Activated T-helper 1 cell treated with anti-CD3 and anti-CD28 coated beads, Interleukin-12 subunit alpha, Interleukin-12 subunit beta, Interleukin-2, Interleukin-4 antibody, amounts not matched to agents 30 ng/mL and 10 ng/mL and 1 ng/mL, durations not matched to agents 14 hours and 24 hours and 36 hours (primary cell): ENCODE measurements at regions of chr4 and their contacts with region 1.

Region 1: DNA sequence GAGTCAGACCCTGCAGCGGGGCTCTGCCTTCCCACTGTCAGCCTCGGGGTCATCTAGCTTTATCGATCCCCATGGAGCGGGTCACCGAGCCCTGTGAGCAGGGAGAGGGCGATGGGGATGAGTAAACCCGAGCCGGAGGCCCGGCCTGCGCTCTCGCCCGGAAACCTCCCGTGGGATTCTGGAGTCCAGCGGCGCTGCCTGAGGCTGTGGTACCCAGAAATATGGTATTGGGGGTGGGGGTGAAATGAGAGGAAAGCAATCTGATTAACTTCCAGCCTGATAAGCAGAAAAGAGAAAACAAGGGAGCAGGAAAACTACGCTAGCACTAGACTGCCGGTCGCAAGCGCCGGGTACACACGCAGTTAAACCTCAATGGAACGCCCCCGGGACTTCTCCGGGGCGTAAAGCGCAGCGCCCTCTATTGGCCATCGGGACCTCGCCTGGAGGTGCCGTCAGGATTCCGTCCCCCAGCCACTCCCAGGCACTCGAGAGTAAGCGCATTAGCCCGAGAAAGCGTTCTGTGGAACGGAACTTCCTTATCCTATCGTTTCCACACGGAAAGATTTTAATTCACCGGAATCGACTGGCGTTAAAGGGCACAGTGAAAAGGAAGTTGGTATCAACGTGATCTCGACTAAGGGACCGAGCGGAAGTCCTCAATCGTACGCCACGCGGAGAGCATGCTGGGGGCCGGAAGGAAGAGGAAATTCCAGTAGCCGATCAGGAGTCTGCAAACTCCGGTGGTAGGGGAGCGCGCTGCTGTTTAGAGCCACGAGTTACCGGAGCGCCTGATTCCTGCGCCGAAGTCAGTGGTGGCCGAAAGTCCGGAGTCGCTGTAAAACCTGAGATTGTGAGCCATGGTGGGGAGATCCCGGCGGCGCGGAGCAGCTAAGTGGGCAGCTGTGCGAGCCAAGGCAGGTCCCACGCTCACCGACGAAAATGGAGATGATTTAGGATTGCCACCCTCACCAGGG is at the start of gene UTP3:
- DNase-seq: peak; percentile 88
- H3K4me3 Mint-ChIP-seq: peak within 1 kb of the TSS; percentile 99
- H3K27ac Mint-ChIP-seq: peak within 1 kb of the TSS; percentile 98
- H3K4me1 Mint-ChIP-seq: peaks cover 33% of the 10 kb centered on the region
- H3K27me3 Mint-ChIP-seq: peaks cover 2% of the 10 kb centered on the region
- total RNA-seq, gene UTP3: 51.5 and 52.8 TPM in 2 replicates

Region 2: DNA sequence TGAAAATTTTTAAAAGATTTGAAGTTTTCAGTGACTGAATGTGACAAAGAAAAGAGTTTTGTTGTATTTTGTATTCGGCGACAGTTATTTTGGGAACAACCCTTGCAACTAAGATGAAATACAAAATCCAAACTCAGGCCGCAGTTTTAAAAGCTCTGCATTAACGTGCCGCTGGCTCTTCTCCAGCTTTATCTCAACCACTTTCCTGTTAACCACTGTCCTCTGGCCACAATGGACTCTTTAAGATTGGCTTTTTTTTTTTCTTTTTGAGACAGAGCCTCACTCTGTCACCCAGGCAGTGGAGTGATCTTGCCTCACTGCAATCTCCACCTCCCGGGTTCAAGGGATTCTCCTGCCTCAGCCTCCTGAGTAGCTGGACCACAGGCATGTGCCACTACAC is 191.9 kb before region 1 on chr4:
- intact Hi-C with region 1: no loop called
- DNase-seq: no peak
- H3K4me3 Mint-ChIP-seq: no peak overlapping the region
- H3K27ac Mint-ChIP-seq: no peak overlapping the region
- H3K4me1 Mint-ChIP-seq: no peaks in the 10 kb centered on the region
- H3K27me3 Mint-ChIP-seq: no peaks in the 10 kb centered on the region

Region 3: GRCh38 chr4:70601422-70602039 is 86.6 kb before region 1 on chr4:
- intact Hi-C with region 1: loop called (anchors 1 kb)
- DNase-seq: peak; percentile 44
- H3K4me3 Mint-ChIP-seq: no peak overlapping the region
- H3K27ac Mint-ChIP-seq: no peak overlapping the region
- H3K4me1 Mint-ChIP-seq: no peaks in the 10 kb centered on the region
- H3K27me3 Mint-ChIP-seq: peaks cover 13% of the 10 kb centered on the region

Region 4: GRCh38 chr4:70651864-70652506 is 36.1 kb before region 1 on chr4:
- intact Hi-C with region 1: loop called (anchors 1 kb)
- DNase-seq: no peak
- H3K4me3 Mint-ChIP-seq: no peak overlapping the region
- H3K27ac Mint-ChIP-seq: no peak overlapping the region
- H3K4me1 Mint-ChIP-seq: peaks cover 4% of the 10 kb centered on the region
- H3K27me3 Mint-ChIP-seq: peaks cover 14% of the 10 kb centered on the region

Region 5: GRCh38 chr4:70734168-70734954 is 46.3 kb after region 1 on chr4:
- intact Hi-C with region 1: loop called (anchors 1 kb)
- DNase-seq: peak; percentile 29
- H3K4me3 Mint-ChIP-seq: peak overlapping the region; percentile 68
- H3K27ac Mint-ChIP-seq: peak overlapping the region; percentile 33
- H3K4me1 Mint-ChIP-seq: peaks cover 36% of the 10 kb centered on the region
- H3K27me3 Mint-ChIP-seq: no peaks in the 10 kb centered on the region

Region 6: DNA sequence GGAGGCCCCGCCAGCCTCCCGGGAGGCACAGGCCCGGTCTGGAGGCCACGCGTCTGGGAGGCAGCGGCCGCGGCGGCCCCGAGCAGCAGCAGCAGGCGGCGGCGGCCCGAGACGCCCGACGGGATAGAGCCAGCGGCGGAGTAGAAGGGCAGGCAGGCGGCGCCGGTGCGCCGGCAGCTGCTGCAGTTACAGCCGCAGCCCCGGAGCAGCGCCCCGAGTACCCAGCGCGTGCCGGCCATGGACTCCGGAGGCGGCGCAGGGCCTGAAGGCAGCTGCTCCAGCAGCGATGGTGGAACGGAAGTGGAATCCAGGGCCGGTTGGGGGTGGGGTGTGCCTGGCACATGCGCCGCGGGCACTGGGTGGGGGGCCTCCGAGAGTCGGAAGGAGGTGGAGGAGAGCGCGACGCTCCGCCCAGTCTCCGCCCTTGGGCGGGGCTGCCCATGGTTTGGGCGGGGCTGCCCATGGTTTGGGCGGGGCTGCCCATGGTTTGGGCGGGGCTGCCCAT is 151.5 kb after region 1 on chr4 and contains the start of gene GRSF1:
- intact Hi-C with region 1: loop called (anchors 1 kb)
- DNase-seq: peak; percentile 89
- H3K4me3 Mint-ChIP-seq: peak within 1 kb of the TSS; percentile 99
- H3K27ac Mint-ChIP-seq: peak within 1 kb of the TSS; percentile 100
- H3K4me1 Mint-ChIP-seq: peaks cover 20% of the 10 kb centered on the region
- H3K27me3 Mint-ChIP-seq: no peaks in the 10 kb centered on the region
- total RNA-seq, gene GRSF1: 124 and 133 TPM in 2 replicates

Region 7: DNA sequence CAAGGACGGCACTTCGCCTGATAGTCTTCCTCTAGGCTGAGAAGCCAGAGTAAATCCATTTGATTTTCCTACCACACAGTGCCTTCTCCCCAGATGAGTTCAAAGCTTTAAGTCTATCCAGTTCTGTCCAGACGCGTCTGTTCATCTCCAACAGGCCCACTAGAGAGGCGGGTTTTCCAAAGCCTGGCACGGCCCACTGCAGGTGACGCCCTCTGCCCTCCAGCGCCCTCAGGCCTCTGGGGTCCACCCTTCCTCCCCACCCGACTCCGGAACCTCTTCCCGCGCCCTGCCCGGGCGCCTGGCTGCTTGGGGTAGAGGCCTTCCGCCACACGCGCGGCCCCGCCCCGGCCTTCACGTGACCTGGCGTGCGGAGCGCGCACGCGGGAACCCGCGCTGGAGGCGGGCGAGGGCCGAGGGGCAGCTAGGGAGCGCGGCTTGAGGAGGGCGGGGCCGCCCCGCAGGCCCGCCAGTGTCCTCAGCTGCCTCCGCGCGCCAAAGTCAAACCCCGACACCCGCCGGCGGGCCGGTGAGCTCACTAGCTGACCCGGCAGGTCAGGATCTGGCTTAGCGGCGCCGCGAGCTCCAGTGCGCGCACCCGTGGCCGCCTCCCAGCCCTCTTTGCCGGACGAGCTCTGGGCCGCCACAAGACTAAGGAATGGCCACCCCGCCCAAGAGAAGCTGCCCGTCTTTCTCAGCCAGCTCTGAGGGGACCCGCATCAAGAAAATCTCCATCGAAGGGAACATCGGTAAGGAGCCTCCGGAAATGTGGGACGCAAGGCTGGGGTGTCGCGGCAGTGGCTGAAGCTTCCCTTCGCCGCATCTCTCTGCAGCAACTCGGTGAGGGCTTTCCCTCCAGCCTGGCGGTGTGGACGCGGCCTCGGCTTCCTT is 305.3 kb after region 1 on chr4 and contains the start of gene DCK:
- intact Hi-C with region 1: loop called (anchors 1 kb)
- DNase-seq: peak; percentile 85
- H3K4me3 Mint-ChIP-seq: peak within 1 kb of the TSS; percentile 97
- H3K27ac Mint-ChIP-seq: peak within 1 kb of the TSS; percentile 83
- H3K4me1 Mint-ChIP-seq: peaks cover 53% of the 10 kb centered on the region
- H3K27me3 Mint-ChIP-seq: no peaks in the 10 kb centered on the region
- total RNA-seq, gene DCK: 35.6 and 37.3 TPM in 2 replicates